Mucosa of descending colon (tissue), 3 donors: ENCODE measurements at regions of chr20 and their contacts with region 1.

Region 1: GRCh38 chr20:22106308-22106938 is 401.0 kb downstream of the PAX1 start:
- DNase-seq: no peak
- ATAC-seq: no peak
- H3K4me3 ChIP-seq: no peak overlapping the region
- H3K4me1 ChIP-seq: no peaks in the 10 kb centered on the region
- CTCF ChIP-seq: no peak

Region 2: GRCh38 chr20:21719592-21720214 is 386.7 kb before region 1 on chr20:
- intact Hi-C with region 1: loop called in 1 of 2 experiments (anchors 5 kb)
- DNase-seq: peak in 1 of 3 donors; percentile 78
- ATAC-seq: no peak
- H3K4me3 ChIP-seq: no peak overlapping the region
- H3K4me1 ChIP-seq: no peaks in the 10 kb centered on the region
- CTCF ChIP-seq: peak; percentile 51